ENCODE measurements at regions of chr4 and their contacts with region 1.

Region 1: GRCh38 chr4:147866532-147867271 is 134.8 kb downstream of the ARHGAP10 start:
- DNase-seq: peak; percentile 96
- ATAC-seq: peak; percentile 92
- H3K4me3 Mint-ChIP-seq: no peak overlapping the region
- H3K27ac Mint-ChIP-seq: no peak overlapping the region
- H3K4me1 Mint-ChIP-seq: no peaks in the 10 kb centered on the region
- H3K27me3 Mint-ChIP-seq: no peaks in the 10 kb centered on the region

Region 2: DNA sequence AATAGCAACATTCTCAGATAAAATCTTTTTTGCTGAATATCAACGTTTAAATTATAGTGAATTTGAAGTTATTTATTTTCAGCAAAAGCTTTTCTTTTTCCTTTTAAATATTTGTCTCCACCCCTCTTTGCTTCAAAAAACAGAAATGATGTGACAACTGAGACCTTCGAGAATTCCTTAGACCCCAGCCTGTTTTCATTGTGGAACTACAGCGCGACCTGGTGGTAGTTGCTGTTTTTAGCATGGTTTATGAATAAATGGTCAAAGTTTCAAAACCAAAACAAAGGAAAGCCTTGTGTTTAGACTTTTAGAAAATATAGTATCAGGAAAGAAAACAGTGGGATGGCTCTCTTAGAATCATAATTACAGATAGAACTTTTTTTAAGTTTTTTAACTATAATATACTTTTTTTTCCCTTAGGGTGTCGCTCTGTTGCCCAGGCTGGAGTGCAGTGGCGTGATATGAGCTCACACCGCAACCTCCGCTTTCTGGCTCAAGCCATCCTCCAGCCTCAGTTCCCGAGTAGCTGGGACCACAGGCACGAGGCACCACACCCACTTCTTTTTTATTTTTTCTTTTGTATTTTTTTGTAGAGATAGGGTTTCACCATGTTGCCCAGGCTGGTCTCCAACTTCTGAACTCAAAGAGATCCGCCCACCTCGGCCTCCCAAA is 276.3 kb before region 1 on chr4:
- CTCF ChIA-PET with region 1: interaction called, 21 read pairs
- POLR2A ChIA-PET with region 1: no interaction called
- intact Hi-C with region 1: loop called (anchors 2 to 5 kb)
- DNase-seq: peak; percentile 69
- ATAC-seq: no peak
- H3K4me3 Mint-ChIP-seq: no peak overlapping the region
- H3K27ac Mint-ChIP-seq: no peak overlapping the region
- H3K4me1 Mint-ChIP-seq: no peaks in the 10 kb centered on the region
- H3K27me3 Mint-ChIP-seq: peaks cover 4% of the 10 kb centered on the region

Region 3: GRCh38 chr4:147640331-147640730 is 226.4 kb before region 1 on chr4:
- CTCF ChIA-PET with region 1: interaction called, 16 read pairs
- POLR2A ChIA-PET with region 1: no interaction called
- intact Hi-C with region 1: no loop called
- DNase-seq: no peak
- ATAC-seq: no peak
- H3K4me3 Mint-ChIP-seq: no peak overlapping the region
- H3K27ac Mint-ChIP-seq: no peak overlapping the region
- H3K4me1 Mint-ChIP-seq: peaks cover 17% of the 10 kb centered on the region
- H3K27me3 Mint-ChIP-seq: no peaks in the 10 kb centered on the region

Region 4: DNA sequence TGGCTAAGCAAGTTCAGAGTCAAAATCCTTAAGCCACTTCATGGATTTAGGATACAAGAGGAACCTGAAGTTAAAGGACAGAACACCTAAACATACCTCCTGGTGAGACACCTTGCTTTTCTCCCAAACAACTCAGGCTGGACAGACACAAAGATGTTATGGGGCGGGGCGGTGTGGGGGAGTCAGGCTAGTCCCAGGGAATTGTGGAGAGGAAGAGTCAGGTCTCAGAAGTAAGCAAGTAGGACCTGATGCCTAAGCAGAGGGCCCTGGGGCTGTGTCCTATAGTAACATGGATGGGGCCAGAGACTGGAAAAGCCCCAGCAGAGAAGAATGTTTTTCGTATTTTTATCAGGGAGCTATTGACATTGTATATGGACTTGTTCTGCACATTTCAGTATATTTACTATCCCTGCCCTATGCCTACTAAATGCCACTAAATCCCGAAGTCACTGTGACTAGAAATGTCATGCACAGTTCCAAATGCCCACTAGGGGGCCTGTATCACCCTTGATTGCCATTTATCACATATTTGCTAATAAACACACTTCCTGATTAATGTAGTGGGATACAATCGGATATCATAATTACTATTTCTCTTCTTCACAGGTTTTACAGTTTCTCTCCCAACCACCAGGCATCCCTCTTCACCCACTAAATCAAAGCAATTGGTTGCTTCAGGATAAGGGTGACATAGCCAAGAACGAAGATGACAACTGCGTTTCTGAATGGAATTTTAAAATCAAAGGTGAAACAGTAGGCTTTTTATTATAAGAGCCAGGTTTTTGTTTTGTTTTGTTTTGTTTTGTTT is 158.6 kb before region 1 on chr4:
- CTCF ChIA-PET with region 1: interaction called, 76 read pairs
- POLR2A ChIA-PET with region 1: no interaction called
- intact Hi-C with region 1: loop called (anchors 1 kb)
- DNase-seq: peak; percentile 64
- ATAC-seq: peak; percentile 60
- H3K4me3 Mint-ChIP-seq: no peak overlapping the region
- H3K27ac Mint-ChIP-seq: no peak overlapping the region
- H3K4me1 Mint-ChIP-seq: no peaks in the 10 kb centered on the region
- H3K27me3 Mint-ChIP-seq: no peaks in the 10 kb centered on the region

Region 5: DNA sequence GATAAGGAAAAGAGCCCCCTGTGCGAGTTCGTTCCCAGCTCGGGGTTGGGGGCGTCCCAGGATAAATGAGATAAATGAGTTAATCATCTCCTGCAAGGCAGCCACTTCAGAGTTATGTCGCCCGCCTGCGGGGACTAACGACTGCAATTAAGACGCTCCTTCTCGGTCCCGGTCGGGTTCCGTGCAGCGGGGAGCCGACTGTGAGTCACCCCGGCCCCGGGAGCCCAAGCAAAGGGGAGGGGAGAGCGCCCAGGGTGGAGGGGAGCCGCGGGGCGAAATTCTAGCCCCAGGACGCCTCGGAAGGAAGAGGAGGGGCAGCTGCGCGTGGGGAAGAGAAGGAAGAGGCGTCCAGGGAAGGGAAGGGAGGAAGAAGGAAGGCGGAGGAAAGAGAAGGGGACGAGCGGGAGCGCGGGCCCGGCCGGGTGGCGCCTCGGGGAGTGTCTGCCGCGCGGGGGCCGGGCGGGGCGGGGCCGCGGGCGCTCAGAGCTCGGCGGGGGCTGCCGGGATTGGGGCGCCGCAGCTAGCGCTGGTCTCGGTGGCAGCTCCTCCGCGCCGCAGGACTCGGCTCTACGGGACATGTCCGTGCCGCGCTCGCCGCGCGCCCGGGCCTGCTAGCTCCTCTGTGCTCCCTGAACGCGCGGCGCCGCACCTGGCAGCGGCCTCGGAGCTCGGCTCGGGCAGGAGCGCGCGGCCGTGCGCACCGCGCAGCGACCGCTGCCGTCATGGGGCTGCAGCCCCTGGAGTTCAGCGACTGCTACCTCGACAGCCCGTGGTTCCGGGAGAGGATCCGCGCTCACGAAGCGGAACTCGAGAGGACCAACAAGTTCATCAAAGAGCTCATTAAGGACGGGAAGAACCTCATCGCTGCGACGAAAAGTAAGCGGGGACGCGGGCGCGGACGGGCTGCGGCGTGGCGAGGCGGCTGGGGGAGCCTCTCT is 134.9 kb before region 1 on chr4 and contains the start of gene ARHGAP10:
- CTCF ChIA-PET with region 1: interaction called, 13 read pairs
- POLR2A ChIA-PET with region 1: no interaction called
- intact Hi-C with region 1: loop called in 1 of 2 experiments (anchors 2 kb)
- DNase-seq: peak; percentile 83
- ATAC-seq: peak; percentile 82
- H3K4me3 Mint-ChIP-seq: peak within 1 kb of the TSS; percentile 85
- H3K27ac Mint-ChIP-seq: peak within 1 kb of the TSS; percentile 87
- H3K4me1 Mint-ChIP-seq: peaks cover 45% of the 10 kb centered on the region
- H3K27me3 Mint-ChIP-seq: peaks cover 3% of the 10 kb centered on the region
- total RNA-seq, gene ARHGAP10: 6.1 to 6.2 TPM

Region 6: GRCh38 chr4:147822128-147822527 is 44.6 kb before region 1 on chr4:
- CTCF ChIA-PET with region 1: no interaction called
- POLR2A ChIA-PET with region 1: no interaction called
- intact Hi-C with region 1: no loop called
- DNase-seq: no peak
- ATAC-seq: no peak
- H3K4me3 Mint-ChIP-seq: no peak overlapping the region
- H3K27ac Mint-ChIP-seq: no peak overlapping the region
- H3K4me1 Mint-ChIP-seq: peaks cover 2% of the 10 kb centered on the region
- H3K27me3 Mint-ChIP-seq: no peaks in the 10 kb centered on the region

Region 7: DNA sequence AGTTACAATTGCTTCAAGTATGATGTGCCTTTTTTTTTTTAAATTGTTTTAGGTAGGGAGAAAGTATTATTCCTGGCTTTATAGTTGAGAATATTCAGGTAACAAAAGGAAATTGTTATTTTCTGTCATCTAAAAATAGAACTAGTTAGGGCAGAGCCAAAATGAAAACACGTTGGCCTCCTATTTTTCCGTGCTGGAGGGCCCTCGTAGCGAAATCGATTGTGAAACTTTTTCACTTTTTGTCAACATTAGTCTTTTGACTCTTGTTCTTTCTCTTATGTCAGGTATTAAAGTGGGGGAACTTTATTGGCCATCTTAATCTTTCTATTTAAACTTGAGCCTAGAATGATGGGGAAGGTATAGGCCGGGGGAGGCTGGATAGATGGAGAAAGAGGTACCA is 29.9 kb before region 1 on chr4:
- CTCF ChIA-PET with region 1: interaction called, 39 read pairs
- POLR2A ChIA-PET with region 1: no interaction called
- intact Hi-C with region 1: no loop called
- DNase-seq: peak; percentile 13
- ATAC-seq: peak; percentile 30
- H3K4me3 Mint-ChIP-seq: no peak overlapping the region
- H3K27ac Mint-ChIP-seq: no peak overlapping the region
- H3K4me1 Mint-ChIP-seq: peaks cover 16% of the 10 kb centered on the region
- H3K27me3 Mint-ChIP-seq: no peaks in the 10 kb centered on the region

Region 8: GRCh38 chr4:147891476-147892115 is 24.9 kb after region 1 on chr4:
- CTCF ChIA-PET with region 1: interaction called, 10 read pairs
- POLR2A ChIA-PET with region 1: no interaction called
- intact Hi-C with region 1: no loop called
- DNase-seq: no peak
- ATAC-seq: no peak
- H3K4me3 Mint-ChIP-seq: no peak overlapping the region
- H3K27ac Mint-ChIP-seq: no peak overlapping the region
- H3K4me1 Mint-ChIP-seq: no peaks in the 10 kb centered on the region
- H3K27me3 Mint-ChIP-seq: no peaks in the 10 kb centered on the region

Region 9: DNA sequence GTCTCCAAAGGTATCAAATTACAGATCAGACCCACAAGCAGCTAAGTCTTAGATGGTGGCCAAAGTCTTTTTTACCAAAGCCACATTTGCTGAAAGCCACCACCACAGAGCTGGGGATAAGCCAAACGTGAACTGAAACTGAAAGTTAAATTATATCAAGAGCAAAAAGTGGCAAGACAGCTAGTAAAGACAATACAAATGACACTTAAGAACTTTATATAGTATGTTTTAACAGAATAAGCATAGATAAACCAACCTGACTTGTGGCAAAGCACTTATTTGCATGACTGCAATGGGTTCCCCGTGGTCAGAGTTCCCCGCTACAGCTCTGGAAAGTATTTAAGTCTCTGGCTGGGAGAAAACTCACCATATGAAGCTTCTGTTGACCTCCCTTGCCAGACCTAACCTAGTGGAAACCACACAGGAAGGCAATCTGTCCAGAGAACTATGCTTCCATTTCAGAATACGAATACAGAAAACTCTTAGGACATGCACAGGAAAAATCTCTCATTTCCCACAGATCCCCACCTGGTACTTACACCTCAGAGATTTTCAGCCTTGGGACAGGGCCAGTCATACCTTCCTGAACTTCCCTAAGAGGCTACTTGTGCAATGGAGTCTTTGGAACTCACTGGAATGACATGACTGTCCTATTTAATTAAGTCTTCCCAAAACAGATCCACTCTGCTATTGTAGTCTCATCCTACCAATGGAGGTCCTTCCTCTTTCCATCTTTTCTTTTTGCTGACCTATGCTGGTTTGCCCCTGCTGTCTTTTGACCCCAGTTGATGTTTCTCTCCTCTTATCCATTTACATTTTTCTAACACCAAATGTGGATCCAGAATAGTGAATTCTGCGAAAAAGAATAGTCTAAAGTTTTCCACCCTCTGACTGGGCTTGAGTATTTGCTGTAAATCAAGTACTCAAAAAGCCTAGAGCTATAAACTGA is 350.4 kb after region 1 on chr4:
- CTCF ChIA-PET with region 1: no interaction called
- POLR2A ChIA-PET with region 1: no interaction called
- intact Hi-C with region 1: no loop called
- DNase-seq: peak; percentile 15
- ATAC-seq: peak; percentile 79
- H3K4me3 Mint-ChIP-seq: peak overlapping the region; percentile 62
- H3K27ac Mint-ChIP-seq: peak overlapping the region; percentile 79
- H3K4me1 Mint-ChIP-seq: peaks cover 24% of the 10 kb centered on the region
- H3K27me3 Mint-ChIP-seq: no peaks in the 10 kb centered on the region

Measured in activated CD4-positive, alpha-beta T cell treated with anti-CD3 and anti-CD28 coated beads for 36 hours (primary cell).